KBM-7 (cell line): ENCODE measurements at regions of chr19 and their contacts with region 1.

Region 1: DNA sequence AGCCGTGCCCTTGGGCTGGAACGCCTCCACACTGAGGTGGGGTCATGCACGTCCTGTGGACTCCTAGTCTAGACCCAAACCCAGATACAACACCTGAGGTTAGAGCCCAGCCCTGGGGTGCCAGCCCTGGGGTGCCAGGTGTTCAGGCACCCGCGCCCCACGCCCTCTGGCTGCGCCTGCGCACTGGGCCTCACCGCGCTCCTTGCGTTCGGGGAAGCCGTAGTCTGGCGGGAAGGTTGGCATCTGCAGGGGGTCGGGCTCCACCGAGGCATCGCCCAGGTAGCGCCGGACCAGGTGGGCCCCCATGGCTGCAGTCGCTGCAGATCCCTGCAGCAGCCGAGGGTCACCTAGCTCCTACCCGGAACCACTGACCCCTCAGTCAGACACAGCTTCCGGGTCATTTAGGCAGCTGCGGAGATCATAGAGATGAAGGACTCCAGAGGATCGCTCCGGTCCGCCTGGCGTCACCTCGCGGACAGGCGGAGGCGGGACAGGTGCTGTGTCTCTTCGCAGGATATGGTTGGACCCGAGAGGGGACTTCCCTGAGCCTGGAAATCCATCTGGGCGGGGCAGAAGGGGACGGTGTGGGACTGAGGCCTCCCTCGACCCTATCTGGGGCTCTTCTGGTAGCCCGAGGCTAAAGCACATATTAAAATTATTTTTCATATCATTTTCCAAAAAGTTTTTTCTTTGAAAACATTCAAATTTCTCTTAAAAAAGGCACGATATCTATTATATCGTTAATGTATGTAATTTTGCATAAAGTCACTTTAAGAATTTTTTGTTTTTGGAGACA is at the start of gene NDUFB7:
- DNase-seq: peak; percentile 92

Region 2: GRCh38 chr19:14496028-14496833 is 75.7 kb before region 1 on chr19 and contains the start of gene GIPC1:
- in situ Hi-C with region 1: no loop called
- DNase-seq: peak; percentile 96

Region 3: DNA sequence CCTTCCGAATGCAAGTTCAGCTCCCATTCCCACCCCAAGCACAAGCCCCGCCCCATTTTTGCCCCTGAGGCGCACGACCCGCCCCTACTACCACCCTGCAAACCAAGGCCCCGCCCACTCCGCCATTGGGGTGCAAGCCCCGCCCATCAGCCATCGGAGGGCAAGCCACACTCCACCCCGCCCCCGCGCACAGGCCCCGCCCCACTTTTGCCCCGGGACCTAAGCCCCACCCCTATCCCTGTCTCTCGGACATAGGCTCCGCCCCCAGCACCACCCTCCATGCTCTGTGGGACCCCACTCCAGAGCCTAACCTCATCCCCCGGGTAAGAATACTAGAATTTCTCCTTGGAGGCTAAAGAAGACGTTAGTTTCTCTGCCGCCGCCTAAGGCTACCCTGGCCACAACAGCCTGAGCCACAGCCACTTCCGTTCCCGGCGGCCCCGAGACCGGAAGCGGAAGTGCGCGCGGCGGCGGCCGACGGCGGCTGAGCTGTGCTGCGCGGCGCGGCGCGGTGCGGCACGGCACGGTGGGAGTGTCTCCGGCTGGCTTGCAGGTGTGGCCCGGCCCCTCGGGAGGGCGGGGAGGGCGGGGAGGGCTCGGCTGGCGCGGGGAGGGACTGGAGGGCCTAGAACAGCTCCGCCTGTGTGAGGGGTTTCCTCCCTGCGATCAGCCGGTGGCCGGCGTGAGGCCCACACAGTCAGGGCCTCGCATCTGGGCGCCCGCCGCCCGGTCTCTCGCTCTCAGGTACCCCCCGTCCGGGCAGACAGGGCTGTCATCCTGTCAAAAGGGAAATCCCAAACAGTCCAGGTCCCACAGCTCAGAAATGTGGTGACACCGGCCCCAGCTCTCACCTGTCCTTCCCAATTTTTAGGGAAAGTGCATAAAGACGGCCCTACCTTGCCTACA is 118.0 kb after region 1 on chr19 and contains the start of gene ZNF333:
- in situ Hi-C with region 1: loop called (anchors 10 kb)
- DNase-seq: peak; percentile 93

Region 4: GRCh38 chr19:14775869-14776586 is 204.1 kb after region 1 on chr19:
- in situ Hi-C with region 1: no loop called
- DNase-seq: peak; percentile 31